ENCODE measurements at regions of chr4 and their contacts with region 1.

Region 1: GRCh38 chr4:82900331-82901128 is at the start of gene THAP9:
- DNase-seq: peak; percentile 100
- H3K4me3 ChIP-seq: peak within 1 kb of the TSS; percentile 71 to 98 (median 89)
- H3K27ac ChIP-seq: peak within 1 kb of the TSS; percentile 92 to 97
- H3K4me1 ChIP-seq: peaks cover 24 to 53% (median 43%) of the 10 kb centered on the region in 4 experiments
- H3K27me3 ChIP-seq: no peaks in the 10 kb centered on the region

Region 2: DNA sequence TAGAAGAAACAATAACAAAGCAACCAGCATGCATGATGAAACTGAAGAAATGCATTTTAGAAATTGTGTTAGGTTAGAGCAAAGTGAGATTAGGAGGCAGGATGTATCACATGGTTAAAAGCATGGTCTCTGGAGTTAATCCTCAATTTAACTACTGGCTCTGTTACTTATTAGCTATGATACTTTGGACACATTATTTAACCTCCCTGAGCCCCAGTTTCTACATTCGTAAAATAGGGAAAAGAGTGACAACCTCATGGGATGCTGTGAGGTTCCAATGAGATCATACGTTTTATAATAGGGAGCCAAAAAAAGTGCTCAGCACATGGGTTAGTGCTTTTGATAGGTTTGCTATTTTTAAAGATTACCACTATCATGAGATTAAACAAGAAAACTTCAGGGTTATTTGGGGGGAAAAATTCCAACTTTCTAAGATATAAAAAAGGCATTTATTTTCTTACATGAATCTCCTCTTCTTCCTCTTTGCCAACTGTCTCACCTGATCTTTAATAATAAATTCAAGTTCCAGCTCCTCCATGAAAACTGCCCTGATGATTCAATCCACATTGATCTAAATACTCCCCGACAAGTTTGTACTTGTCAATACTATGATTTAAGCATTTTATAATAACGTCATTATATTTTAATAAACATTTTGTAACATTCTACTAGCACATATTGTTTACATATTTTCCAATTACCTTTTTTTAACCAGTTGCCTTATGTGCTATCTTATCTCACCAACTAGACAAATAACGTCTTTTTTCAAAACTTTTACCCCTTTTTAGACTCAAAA is 14.2 kb before region 1 on chr4:
- CTCF ChIA-PET with region 1: interaction called, 12 read pairs
- POLR2A ChIA-PET with region 1: interaction called, 5 read pairs
- DNase-seq: no peak
- H3K4me3 ChIP-seq: no peak overlapping the region
- H3K27ac ChIP-seq: no peak overlapping the region
- H3K4me1 ChIP-seq: peaks cover 9 to 12% (median 11%) of the 10 kb centered on the region in 4 experiments
- H3K27me3 ChIP-seq: no peaks in the 10 kb centered on the region

Measured in common myeloid progenitor, CD34-positive (primary cell).